IMR-90 (cell line): ENCODE measurements at regions of chr4 and their contacts with region 1.

Region 1: GRCh38 chr4:179624768-179625181 is 2182.5 kb upstream of the AGA start:
- DNase-seq: peak; percentile 89
- ATAC-seq: peak; percentile 87
- H3K4me3 ChIP-seq: no peak overlapping the region
- H3K27ac ChIP-seq: peak overlapping the region; percentile 61
- H3K4me1 ChIP-seq: peaks cover 5% of the 10 kb centered on the region
- H3K27me3 ChIP-seq: no peaks in the 10 kb centered on the region
- CTCF ChIP-seq: no peak
- POLR2A ChIP-seq: no peak
- RAD21 ChIP-seq: peak; percentile 1; the same call in 1 of the 2 replicates

Region 2: GRCh38 chr4:179605196-179605595 is 19.6 kb before region 1 on chr4:
- CTCF ChIA-PET with region 1: interaction called, 4 read pairs
- POLR2A ChIA-PET with region 1: no interaction called
- dilution Hi-C with region 1: no loop called
- in situ Hi-C with region 1: no loop called
- intact Hi-C with region 1: loop called (anchors 2 kb)
- DNase-seq: peak; percentile 92
- ATAC-seq: peak; percentile 86
- H3K4me3 ChIP-seq: no peak overlapping the region
- H3K27ac ChIP-seq: no peak overlapping the region
- H3K4me1 ChIP-seq: no peaks in the 10 kb centered on the region; the same call in 1 of the 2 replicates
- H3K27me3 ChIP-seq: no peaks in the 10 kb centered on the region
- CTCF ChIP-seq: no peak
- POLR2A ChIP-seq: no peak
- RAD21 ChIP-seq: no peak